Vagina (tissue), 2 donors: ENCODE measurements at regions of chr5 and their contacts with region 1.

Region 1: DNA sequence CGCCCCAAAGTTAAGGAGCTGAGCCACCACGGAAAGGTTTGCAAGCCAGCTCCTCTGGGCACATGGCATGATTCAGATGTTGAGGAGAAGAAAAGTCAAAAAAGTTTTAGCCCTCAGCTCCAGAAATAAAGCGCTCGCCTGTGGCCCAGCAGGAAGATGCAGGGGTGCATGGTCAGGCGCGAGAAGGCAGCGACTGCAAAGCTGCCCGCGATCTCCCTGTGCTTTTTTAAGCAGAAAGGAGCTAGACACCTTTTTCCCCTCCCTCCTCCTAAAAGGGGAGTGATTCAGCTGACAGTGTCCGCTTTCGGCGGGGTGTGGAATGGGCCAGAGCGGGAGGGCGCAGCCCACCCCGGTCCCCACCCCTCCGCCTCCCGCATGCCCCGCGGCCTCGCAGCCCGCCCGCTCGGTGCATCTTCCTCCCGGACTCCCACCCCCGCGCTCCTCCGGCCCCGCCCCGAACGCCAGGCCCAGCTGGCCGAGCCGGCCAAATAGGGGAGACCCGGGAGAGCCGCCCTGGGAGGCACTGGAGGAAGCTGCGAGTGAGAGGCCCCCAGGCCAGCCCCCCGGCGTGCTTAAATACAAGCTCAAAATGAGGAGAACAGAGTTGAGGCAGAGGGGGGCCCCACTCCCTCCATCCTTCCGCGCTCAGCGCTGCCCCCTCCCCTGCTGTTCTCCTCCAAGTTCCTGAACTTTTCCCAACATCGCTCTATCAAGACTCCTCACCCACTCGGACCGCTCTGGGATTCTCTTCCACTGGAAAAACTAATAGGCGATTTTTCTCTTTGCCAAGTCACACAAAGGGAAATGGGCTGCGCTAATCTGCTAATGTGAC is at the start of gene ADAMTS12:
- DNase-seq: no peak
- H3K4me3 ChIP-seq: peak within 1 kb of the TSS; percentile 39 to 47
- H3K27ac ChIP-seq: peak within 1 kb of the TSS; percentile 48
- H3K4me1 ChIP-seq: peaks cover 8% of the 10 kb centered on the region
- H3K27me3 ChIP-seq: no peaks in the 10 kb centered on the region
- CTCF ChIP-seq: no peak
- POLR2A ChIP-seq: no peak
- total RNA-seq, gene ADAMTS12: 7.6 TPM

Region 2: DNA sequence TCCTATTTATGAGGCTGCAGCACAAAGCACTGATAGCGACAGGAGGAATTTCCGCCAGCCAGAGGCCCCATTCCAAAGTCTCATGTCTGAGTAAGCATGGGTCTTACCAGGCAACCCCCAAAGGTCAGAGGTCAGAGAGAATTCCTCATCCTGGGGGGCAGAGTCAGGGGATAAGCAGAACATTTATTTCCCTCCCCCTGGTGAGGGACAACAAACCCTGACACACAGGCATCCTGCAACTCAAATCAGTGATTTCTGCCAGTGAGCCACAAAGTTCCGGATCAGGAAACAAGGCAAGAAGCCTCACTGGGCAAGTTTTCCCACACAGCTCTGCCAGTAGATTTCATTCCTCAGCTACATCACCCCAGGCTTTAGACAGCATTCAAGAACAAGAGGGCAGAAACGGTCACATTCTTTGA is 37.3 kb before region 1 on chr5:
- intact Hi-C with region 1: loop called (anchors 5 kb)
- DNase-seq: no peak
- H3K4me3 ChIP-seq: no peak overlapping the region
- H3K27ac ChIP-seq: no peak overlapping the region
- H3K4me1 ChIP-seq: peaks cover 8% of the 10 kb centered on the region
- H3K27me3 ChIP-seq: no peaks in the 10 kb centered on the region
- CTCF ChIP-seq: no peak
- POLR2A ChIP-seq: no peak

Region 3: DNA sequence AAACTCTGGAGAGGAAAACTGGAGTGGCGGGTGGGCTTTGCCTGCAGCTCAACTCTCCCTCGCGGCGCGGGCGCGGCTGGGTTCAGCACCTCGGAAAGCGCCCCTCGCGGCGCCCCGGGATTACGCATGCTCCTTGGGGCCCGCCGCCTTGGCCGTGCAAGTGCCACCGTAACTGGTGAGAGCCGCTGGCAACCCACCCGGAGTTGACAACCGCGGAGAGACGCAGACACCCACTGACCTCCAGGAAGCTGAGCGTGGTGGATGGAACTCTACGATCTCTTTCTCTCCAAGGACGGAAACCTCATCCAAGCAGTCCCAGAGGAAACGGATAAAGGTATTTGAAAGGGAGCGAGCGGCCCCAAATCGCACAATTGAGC is 44.0 kb after region 1 on chr5:
- intact Hi-C with region 1: no loop called
- DNase-seq: no peak
- H3K4me3 ChIP-seq: peak overlapping the region; percentile 3 to 5
- H3K27ac ChIP-seq: no peak overlapping the region
- H3K4me1 ChIP-seq: no peaks in the 10 kb centered on the region
- H3K27me3 ChIP-seq: no peaks in the 10 kb centered on the region
- CTCF ChIP-seq: no peak
- POLR2A ChIP-seq: no peak